Right ventricle myocardium inferior (tissue), 1 donor: ENCODE measurements at regions of chr7 and their contacts with region 1.

Region 1: GRCh38 chr7:6228361-6229229 is 43.8 kb downstream of the CYTH3 start:
- DNase-seq: no peak
- ATAC-seq: peak; percentile 74

Region 2: DNA sequence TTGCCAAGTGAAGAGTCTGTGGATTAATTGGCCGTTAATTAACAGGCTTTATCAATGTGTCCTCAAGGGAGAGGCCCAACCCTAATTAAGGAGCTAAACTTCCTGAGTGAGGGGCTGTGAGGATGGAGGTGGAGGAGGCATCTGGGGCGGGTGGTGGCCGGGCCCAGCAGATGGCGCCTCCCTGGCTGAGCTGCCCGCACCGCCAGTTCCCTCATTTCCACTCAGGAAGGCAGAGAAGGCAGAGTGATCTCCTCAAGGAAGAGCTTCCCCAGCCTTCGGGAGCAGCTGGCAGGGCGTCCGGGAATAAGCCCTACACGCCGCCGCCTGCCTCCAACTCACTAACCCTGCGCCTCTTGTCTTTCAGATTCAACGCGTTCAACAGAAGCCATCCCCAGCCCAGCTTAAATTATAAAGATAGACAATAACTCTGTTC is 68.4 kb before region 1 on chr7:
- intact Hi-C with region 1: loop called (anchors 5 kb)
- DNase-seq: no peak
- ATAC-seq: peak; percentile 71

Region 3: DNA sequence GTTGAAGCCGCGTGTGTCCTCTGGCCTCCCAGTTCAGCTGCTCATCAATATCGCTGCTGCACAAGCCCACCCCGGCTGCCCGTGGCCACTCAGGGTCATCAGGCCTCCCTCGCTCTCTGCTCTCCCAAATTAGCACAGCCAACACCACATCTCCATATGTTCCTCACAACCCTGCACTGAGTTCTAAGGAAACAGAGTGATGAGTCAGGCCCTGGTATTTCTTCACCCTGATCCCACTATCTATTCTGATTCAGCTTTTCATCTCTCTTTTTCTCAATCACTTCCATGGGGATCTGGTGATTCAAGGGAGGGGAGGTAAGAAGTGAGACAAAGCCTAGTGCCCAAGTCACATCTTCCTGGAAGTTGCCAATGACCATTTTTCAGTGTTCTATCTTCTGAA is 20.0 kb after region 1 on chr7:
- intact Hi-C with region 1: loop called (anchors 2 kb)
- DNase-seq: no peak
- ATAC-seq: peak; percentile 45

Region 4: GRCh38 chr7:6260291-6261187 is 31.9 kb after region 1 on chr7:
- intact Hi-C with region 1: loop called (anchors 2 kb)
- DNase-seq: no peak
- ATAC-seq: peak; percentile 29

Region 5: DNA sequence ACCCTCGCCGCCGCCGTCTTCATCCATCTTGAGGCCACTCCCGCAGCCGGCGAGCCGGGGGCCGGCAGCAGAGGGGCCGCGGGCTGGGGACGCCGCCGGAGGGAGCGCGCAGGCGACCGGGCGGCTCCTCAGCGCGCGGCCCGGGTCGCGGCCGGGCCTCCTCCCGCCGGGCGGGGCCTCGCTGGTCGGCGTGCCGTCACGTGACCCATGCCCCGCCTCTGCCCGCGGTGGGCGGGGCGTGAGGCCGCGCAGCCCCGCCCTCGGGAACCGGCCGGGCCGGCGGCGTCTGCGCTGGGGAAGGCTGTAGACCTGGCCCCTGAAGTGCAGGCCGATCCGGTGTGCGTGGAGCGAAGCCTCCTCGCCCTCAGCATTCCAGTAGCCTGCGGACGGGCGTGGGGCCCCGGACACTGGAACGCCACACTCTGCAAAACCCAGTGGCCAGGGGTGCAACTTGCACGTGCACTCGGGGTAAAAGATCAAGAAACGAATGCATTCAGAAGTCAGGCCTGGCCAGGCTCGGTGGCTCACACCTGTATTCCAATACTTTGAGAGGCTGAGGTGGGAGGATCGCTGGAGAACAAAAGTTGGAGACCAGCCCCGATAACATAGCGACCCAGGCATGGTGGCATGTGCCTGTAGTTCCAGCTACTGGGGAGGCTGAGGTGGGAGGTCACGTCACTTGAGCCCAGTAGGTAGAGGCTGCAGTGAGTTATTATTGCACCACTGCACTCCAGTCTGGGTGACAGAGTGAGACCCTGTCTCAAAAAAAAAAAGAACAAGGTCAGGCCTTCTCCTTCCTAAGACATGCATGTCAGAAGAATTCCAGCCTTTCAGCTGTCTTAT is 44.1 kb after region 1 on chr7 and contains the start of gene CYTH3:
- intact Hi-C with region 1: loop called (anchors 5 kb)
- DNase-seq: peak; percentile 91
- ATAC-seq: peak; percentile 95
- total RNA-seq, gene CYTH3: 30.3 TPM